Body of pancreas (tissue), 4 donors: ENCODE measurements at regions of chr1 and their contacts with region 1.

Region 1: GRCh38 chr1:247119600-247120407 is 15.6 kb upstream of the ZNF669 start:
- DNase-seq: no peak
- ATAC-seq: no peak
- H3K4me3 ChIP-seq: no peak overlapping the region
- H3K27ac ChIP-seq: no peak overlapping the region
- H3K4me1 ChIP-seq: no peaks in the 10 kb centered on the region
- H3K27me3 ChIP-seq: no peaks in the 10 kb centered on the region
- CTCF ChIP-seq: no peak
- POLR2A ChIP-seq: no peak

Region 2: GRCh38 chr1:247156787-247157232 is 37.0 kb after region 1 on chr1:
- intact Hi-C with region 1: no loop called
- DNase-seq: no peak
- ATAC-seq: no peak
- H3K4me3 ChIP-seq: no peak overlapping the region
- H3K27ac ChIP-seq: no peak overlapping the region
- H3K4me1 ChIP-seq: no peaks in the 10 kb centered on the region
- H3K27me3 ChIP-seq: no peaks in the 10 kb centered on the region
- CTCF ChIP-seq: no peak
- POLR2A ChIP-seq: no peak

Region 3: GRCh38 chr1:247172996-247173395 is 53.2 kb after region 1 on chr1:
- intact Hi-C with region 1: loop called (anchors 10 kb)
- DNase-seq: peak in 1 of 4 donors; percentile 14
- ATAC-seq: no peak
- H3K4me3 ChIP-seq: no peak overlapping the region
- H3K27ac ChIP-seq: no peak overlapping the region
- H3K4me1 ChIP-seq: no peaks in the 10 kb centered on the region
- H3K27me3 ChIP-seq: no peaks in the 10 kb centered on the region
- CTCF ChIP-seq: no peak
- POLR2A ChIP-seq: no peak

Region 4: DNA sequence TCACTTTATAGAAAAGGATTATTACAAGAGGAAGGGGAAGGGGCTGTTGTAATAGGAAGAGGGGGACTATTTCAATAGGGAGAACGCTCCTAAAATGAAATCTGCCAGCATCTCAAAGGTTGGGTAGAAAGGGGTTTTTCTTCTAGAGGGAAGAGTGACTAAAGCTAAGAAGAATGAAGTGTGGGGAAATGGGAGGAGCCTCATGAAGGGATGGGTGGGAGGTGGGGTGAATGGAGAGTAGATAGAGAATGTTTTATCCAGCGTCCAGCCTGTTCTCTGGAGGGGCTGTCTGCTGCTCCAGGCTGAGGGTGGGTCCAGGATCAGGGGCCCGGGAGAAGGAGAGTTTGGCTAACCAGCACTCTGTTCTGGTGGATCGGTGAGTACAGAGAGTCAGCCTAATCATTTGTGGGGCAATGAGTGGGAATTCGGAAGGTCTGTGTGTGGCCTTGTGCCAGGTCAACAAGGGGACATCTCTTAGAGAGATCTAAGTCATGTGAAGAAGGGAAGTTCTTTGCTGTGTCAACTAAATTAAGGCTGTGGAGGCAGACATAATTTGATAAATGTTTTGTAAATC is 161.3 kb after region 1 on chr1:
- intact Hi-C with region 1: no loop called
- DNase-seq: no peak
- ATAC-seq: no peak
- H3K4me3 ChIP-seq: no peak overlapping the region
- H3K27ac ChIP-seq: no peak overlapping the region
- H3K4me1 ChIP-seq: no peaks in the 10 kb centered on the region
- H3K27me3 ChIP-seq: no peaks in the 10 kb centered on the region
- CTCF ChIP-seq: no peak
- POLR2A ChIP-seq: no peak